ENCODE measurements at regions of chr11 and their contacts with region 1.

Region 1: GRCh38 chr11:69048718-69049489 is at the start of gene TPCN2:
- DNase-seq: peak; percentile 98
- H3K4me3 ChIP-seq: peak within 1 kb of the TSS; percentile 70 to 99 (median 92)
- H3K27ac ChIP-seq: peak within 1 kb of the TSS; percentile 94 to 99 (median 98)
- H3K4me1 ChIP-seq: peaks cover 0 to 64% (median 59%) of the 10 kb centered on the region in 4 donors
- H3K27me3 ChIP-seq: no peaks in the 10 kb centered on the region
- CTCF ChIP-seq: no peak
- EP300 ChIP-seq: peak in 1 of 4 donors; percentile 73
- POLR2A ChIP-seq: peak; percentile 59 to 87
- total RNA-seq, gene TPCN2: 17.5 to 43.5 (median 25.3) TPM

Region 2: GRCh38 chr11:68673301-68673945 is 375.5 kb before region 1 on chr11:
- intact Hi-C with region 1: no loop called
- DNase-seq: no peak
- H3K4me3 ChIP-seq: no peak overlapping the region
- H3K27ac ChIP-seq: no peak overlapping the region
- H3K4me1 ChIP-seq: peaks cover 0 to 7% (median 3%) of the 10 kb centered on the region in 4 donors
- H3K27me3 ChIP-seq: peaks cover 0 to 3% (median 0%) of the 10 kb centered on the region in 3 donors
- CTCF ChIP-seq: no peak
- EP300 ChIP-seq: no peak
- POLR2A ChIP-seq: no peak

Region 3: DNA sequence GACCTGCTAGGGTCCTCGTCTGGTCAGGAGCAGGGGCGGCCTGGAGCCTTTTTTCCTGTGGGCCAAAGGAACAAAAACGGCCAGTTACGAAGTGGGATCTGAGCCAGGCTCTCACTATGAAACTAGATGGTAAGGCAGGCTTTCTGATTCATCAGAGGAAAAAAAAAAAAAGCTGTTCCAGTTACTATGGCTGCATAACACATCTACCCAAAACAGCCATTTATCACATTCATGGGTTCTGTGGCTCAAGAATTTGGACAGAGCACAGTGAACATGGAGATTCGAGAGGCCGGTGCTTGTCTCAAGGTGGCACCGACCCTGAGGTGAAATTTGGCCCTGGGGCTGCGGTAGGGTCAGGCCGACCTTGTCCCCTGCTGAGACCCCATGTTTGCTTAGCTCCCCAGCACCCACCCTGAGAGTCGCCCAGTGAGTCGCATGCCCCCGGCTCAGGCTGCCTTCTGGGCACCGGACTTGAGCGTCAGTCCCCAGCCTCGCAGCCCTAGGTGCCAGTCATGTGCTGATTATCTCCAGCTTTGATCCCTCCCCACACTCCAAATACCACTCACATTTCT is 102.4 kb before region 1 on chr11:
- intact Hi-C with region 1: loop called (anchors 5 kb)
- DNase-seq: peak; percentile 82
- H3K4me3 ChIP-seq: no peak overlapping the region
- H3K27ac ChIP-seq: peak overlapping the region; percentile 90 to 94 (median 92)
- H3K4me1 ChIP-seq: peaks cover 0 to 69% (median 56%) of the 10 kb centered on the region in 4 donors
- H3K27me3 ChIP-seq: no peaks in the 10 kb centered on the region
- CTCF ChIP-seq: no peak
- EP300 ChIP-seq: peak in 3 of 4 donors; percentile 19 to 87 (median 53)
- POLR2A ChIP-seq: no peak

Region 4: DNA sequence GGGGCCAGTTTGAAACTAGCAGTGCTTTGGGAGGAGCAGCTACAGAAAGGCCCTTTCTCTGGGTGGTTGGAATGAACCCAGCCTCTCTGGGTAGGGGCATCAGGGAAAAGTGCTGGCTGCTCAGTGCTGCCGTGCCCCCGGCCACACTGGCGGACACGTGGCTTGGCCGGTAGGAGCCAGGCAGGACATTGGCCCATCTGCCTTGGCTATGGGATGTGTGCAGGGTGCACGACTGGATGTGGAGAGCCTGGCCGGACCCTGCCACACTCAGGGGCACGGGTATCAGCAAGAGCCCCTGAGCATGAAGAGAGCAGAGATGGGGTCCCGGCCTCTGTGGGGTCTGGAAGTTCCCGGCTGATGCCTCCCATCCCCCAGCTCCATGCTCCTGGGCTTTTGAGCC is 46.4 kb after region 1 on chr11:
- intact Hi-C with region 1: no loop called
- DNase-seq: no peak
- H3K4me3 ChIP-seq: no peak overlapping the region
- H3K27ac ChIP-seq: no peak overlapping the region
- H3K4me1 ChIP-seq: peaks cover 0 to 8% (median 4%) of the 10 kb centered on the region in 4 donors
- H3K27me3 ChIP-seq: no peaks in the 10 kb centered on the region
- CTCF ChIP-seq: no peak
- EP300 ChIP-seq: no peak
- POLR2A ChIP-seq: no peak